Vagina (tissue), 2 donors: ENCODE measurements at regions of chr7 and their contacts with region 1.

Region 1: GRCh38 chr7:128409596-128410160 is at the start of gene IMPDH1:
- DNase-seq: no peak
- H3K4me3 ChIP-seq: peak within 1 kb of the TSS; percentile 63 to 66
- H3K27ac ChIP-seq: peak within 1 kb of the TSS; percentile 90
- H3K4me1 ChIP-seq: peaks cover 42% of the 10 kb centered on the region
- H3K27me3 ChIP-seq: no peaks in the 10 kb centered on the region
- CTCF ChIP-seq: peak in 1 of 3 experiments; percentile 25
- POLR2A ChIP-seq: peak; percentile 22 to 64
- total RNA-seq, gene IMPDH1: 52.3 TPM

Region 2: DNA sequence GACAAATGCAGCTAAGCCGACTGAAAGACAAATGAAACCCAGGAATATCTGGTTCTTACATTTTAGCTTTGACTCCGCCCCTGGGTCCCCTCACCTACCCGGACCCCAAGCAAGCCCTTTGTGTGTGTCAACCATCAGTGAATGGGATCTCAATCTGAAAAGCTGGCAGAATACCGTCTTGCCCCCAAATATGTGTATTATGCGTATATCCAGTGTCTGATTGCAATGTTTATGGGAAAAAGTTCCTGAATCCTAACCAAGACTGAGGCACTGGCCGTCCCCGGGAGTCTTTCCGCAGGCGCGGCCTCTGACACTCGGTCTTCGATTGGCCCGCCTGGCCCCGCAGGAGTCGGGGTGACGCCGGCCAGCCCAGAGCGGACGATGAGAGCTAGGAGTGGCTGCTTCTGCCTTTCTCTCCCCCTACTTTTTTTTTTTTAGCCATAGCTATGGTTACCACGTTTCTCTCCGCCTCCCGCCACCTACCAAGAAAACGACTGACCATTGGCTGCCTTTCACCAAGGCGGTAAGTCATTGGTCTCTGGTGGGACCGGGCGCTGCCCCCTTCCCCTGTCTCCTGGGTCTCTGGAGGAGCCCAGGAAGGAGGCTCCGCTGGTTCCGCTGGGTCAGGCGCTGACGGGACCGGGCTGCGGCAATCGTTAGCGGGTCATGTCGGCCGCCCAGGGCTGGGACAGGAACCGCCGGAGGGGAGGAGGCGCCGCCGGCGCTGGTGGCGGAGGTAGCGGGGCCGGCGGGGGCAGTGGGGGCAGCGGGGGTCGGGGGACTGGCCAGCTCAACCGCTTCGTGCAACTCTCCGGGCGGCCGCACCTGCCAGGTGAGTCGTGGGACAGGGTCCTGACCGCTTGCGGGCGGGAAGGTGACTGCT is 1660.5 kb after region 1 on chr7 and contains the start of gene KLHDC10:
- intact Hi-C with region 1: loop called (anchors 10 kb)
- DNase-seq: peak; percentile 97
- H3K4me3 ChIP-seq: peak within 1 kb of the TSS; percentile 86 to 97
- H3K27ac ChIP-seq: peak within 1 kb of the TSS; percentile 85
- H3K4me1 ChIP-seq: peaks cover 51% of the 10 kb centered on the region
- H3K27me3 ChIP-seq: no peaks in the 10 kb centered on the region
- CTCF ChIP-seq: peak in 1 of 3 experiments; percentile 2
- POLR2A ChIP-seq: no peak
- total RNA-seq, gene KLHDC10: 13.5 TPM